A549 (cell line): ENCODE measurements at regions of chr4 and their contacts with region 1.

Region 1: GRCh38 chr4:109433205-109434006 is at the start of gene SEC24B:
- DNase-seq: peak; percentile 47 to 83
- ATAC-seq: peak; percentile 95 to 97
- H3K4me3 ChIP-seq: peak within 1 kb of the TSS; percentile 98
- H3K27ac ChIP-seq: peak within 1 kb of the TSS; percentile 99 to 100
- H3K4me1 ChIP-seq: peaks cover 17% of the 10 kb centered on the region; the same call in 2 of the 3 replicates
- CTCF ChIP-seq: peak; percentile 81
- EP300 ChIP-seq: no peak
- POLR2A ChIP-seq: peak; percentile 58
- RAD21 ChIP-seq: peak; percentile 7 to 52; a peak in 3 of 5 replicates
- polyA plus RNA-seq, gene SEC24B: 40.0 and 45.0 TPM in 2 replicates

Region 2: GRCh38 chr4:109444182-109444844 is 10.9 kb after region 1 on chr4:
- CTCF ChIA-PET with region 1: interaction called, 13 read pairs
- POLR2A ChIA-PET with region 1: no interaction called
- DNase-seq: no peak
- ATAC-seq: no peak
- H3K4me3 ChIP-seq: no peak overlapping the region
- H3K27ac ChIP-seq: no peak overlapping the region
- H3K4me1 ChIP-seq: peaks cover 35% of the 10 kb centered on the region; the same call in 2 of the 3 replicates
- CTCF ChIP-seq: no peak
- EP300 ChIP-seq: no peak
- POLR2A ChIP-seq: no peak
- RAD21 ChIP-seq: no peak

Region 3: GRCh38 chr4:109701566-109702405 is 268.4 kb after region 1 on chr4:
- CTCF ChIA-PET with region 1: interaction called, 10 read pairs
- POLR2A ChIA-PET with region 1: no interaction called
- DNase-seq: no peak
- ATAC-seq: no peak
- H3K4me3 ChIP-seq: peak overlapping the region; percentile 66
- H3K27ac ChIP-seq: peak overlapping the region; percentile 78 to 97
- H3K4me1 ChIP-seq: peaks cover 16% of the 10 kb centered on the region
- CTCF ChIP-seq: no peak
- EP300 ChIP-seq: no peak
- POLR2A ChIP-seq: no peak
- RAD21 ChIP-seq: no peak